ENCODE measurements at regions of chr1 and their contacts with region 1.

Region 1: GRCh38 chr1:231806623-231807495 is 180.3 kb downstream of the DISC1 start:
- DNase-seq: peak; percentile 57
- ATAC-seq: peak; percentile 94
- H3K4me3 Mint-ChIP-seq: no peak overlapping the region
- H3K27ac Mint-ChIP-seq: no peak overlapping the region
- H3K4me1 Mint-ChIP-seq: no peaks in the 10 kb centered on the region
- H3K27me3 Mint-ChIP-seq: no peaks in the 10 kb centered on the region
- CTCF ChIP-seq: peak; percentile 59

Region 2: GRCh38 chr1:231818337-231818736 is 11.5 kb after region 1 on chr1:
- CTCF ChIA-PET with region 1: interaction called, 12 read pairs
- POLR2A ChIA-PET with region 1: no interaction called
- intact Hi-C with region 1: no loop called
- DNase-seq: no peak
- ATAC-seq: no peak
- H3K4me3 Mint-ChIP-seq: no peak overlapping the region
- H3K27ac Mint-ChIP-seq: no peak overlapping the region
- H3K4me1 Mint-ChIP-seq: no peaks in the 10 kb centered on the region
- H3K27me3 Mint-ChIP-seq: no peaks in the 10 kb centered on the region
- CTCF ChIP-seq: no peak

Region 3: DNA sequence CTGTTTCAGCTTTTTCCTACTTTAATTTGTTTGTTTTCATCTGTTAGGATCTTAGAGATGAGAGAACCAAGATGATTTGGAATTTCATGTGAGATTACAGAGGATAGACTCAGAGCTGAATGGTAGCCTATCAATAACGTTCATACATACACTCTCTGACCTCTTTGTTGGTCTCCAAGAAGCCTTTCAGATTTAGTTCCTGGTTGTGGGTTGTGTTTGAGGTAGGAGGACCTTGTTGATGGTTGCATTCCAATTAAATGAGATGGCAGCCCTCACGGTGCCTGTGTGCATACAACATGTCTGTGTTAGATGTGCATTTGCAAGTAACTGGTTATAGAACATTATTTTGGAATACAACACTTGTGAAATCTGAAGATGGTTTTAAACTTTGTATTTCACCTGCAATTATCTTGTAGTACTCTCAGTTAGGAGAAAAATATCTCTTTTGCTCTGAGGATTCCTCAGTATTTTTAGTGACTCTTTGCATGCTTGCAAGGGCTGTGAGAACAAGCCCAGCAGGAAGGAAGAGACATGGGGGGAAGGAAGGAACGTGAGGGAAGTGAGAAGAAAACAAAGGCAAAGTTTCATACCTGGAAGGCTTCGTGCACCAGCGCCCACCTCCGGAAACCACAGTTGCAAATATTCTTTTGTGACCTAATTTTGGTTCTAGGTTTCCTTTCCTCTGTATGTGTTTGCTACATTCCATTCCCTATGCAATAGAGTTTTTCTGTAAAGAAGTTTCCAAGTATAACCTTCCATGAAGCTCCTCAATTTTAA is 111.6 kb after region 1 on chr1:
- CTCF ChIA-PET with region 1: no interaction called
- POLR2A ChIA-PET with region 1: no interaction called
- intact Hi-C with region 1: no loop called
- DNase-seq: peak; percentile 51
- ATAC-seq: peak; percentile 18
- H3K4me3 Mint-ChIP-seq: peak overlapping the region; percentile 45
- H3K27ac Mint-ChIP-seq: peak overlapping the region; percentile 84
- H3K4me1 Mint-ChIP-seq: peaks cover 76% of the 10 kb centered on the region
- H3K27me3 Mint-ChIP-seq: no peaks in the 10 kb centered on the region
- CTCF ChIP-seq: no peak

Measured in activated CD8-positive, alpha-beta T cell treated with anti-CD3 and anti-CD28 coated beads for 36 hours (primary cell).